Ascending aorta (tissue), 2 donors: ENCODE measurements at regions of chr9 and their contacts with region 1.

Region 1: DNA sequence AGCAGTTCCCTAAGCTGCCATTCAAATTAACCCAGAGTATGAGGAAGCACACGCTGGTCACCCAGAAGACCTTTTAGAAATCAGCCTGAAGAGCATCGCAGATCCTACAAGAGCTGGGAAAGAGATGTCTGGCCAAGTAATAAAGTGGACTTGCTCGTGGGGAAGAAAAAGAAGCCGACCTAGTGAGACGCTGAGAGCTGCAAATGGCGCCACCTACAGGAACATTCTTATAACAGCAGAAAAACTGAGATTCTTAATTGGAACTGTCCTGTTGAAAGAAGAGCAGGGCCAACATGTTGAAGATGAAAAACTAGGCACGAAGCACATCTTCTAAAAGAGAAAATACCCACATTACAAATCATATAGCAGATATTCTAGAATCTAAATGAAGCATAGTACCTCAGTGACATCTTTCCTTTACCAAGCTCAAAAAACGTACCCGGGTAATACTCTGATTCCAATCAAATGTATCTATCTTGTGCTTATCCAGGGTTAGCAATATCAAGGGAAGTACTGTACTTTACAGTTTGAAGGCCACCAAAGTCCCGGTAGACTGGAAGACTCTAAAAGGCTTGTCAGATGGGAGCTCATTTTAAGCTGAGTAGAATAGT is 3.9 kb upstream of the GNAQ start:
- DNase-seq: peak in 1 of 2 donors; percentile 74
- H3K4me3 ChIP-seq: peak overlapping the region in 1 of 2 donors; percentile 40
- H3K27ac ChIP-seq: peak overlapping the region; percentile 56 to 60
- H3K4me1 ChIP-seq: peaks cover 0 to 8% of the 10 kb centered on the region in 2 donors
- H3K27me3 ChIP-seq: no peaks in the 10 kb centered on the region
- CTCF ChIP-seq: peak; percentile 60 to 90 (median 81)

Region 2: DNA sequence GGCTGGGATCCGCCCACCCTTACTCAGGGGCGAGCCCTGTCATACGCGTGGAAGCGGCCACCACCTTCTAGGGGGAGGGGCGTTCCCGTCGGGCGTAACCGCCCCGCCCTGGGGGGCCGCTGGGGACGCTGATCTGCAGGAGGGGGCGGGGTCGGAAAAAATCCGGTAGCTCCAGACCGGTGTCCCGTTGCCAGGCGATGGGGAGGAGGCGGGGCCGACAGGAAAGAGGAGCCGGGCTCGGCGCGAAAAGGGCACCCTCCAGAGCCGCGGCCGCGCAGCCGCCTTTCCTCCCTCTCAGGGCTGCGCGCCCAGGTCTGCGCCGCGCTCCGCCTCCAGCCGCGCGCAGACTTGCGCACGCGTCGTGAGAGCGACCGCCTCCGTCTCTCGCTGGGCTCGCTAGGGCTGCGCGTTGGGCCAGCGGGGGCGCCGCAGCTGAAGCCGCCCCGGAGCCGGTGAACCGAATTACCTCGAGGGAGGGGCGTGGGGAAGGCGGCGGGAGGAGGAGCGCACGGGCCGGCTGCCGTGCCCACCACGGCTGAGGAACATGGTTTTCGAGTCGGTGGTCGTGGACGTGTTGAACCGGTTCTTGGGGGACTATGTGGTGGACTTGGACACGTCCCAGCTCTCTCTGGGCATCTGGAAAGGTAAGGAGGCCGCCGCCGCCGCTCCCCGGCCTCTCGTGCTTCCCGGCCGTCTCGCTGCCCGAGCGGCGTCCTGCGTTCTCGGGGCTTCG is 858.2 kb before region 1 on chr9 and contains the start of gene VPS13A:
- intact Hi-C with region 1: loop called (anchors 10 kb)
- DNase-seq: peak; percentile 78 to 97
- H3K4me3 ChIP-seq: peak within 1 kb of the TSS; percentile 64 to 90
- H3K27ac ChIP-seq: peak within 1 kb of the TSS; percentile 78 to 90
- H3K4me1 ChIP-seq: peaks cover 0 to 15% of the 10 kb centered on the region in 2 donors
- H3K27me3 ChIP-seq: no peaks in the 10 kb centered on the region
- CTCF ChIP-seq: peak in 1 of 3 experiments; percentile 46
- total RNA-seq, gene VPS13A: 18.8 TPM

Region 3: GRCh38 chr9:77456829-77457437 is 578.6 kb before region 1 on chr9:
- intact Hi-C with region 1: loop called (anchors 5 kb)
- DNase-seq: peak; percentile 25 to 92
- H3K4me3 ChIP-seq: no peak overlapping the region
- H3K27ac ChIP-seq: no peak overlapping the region
- H3K4me1 ChIP-seq: peaks cover 0 to 3% of the 10 kb centered on the region in 2 donors
- H3K27me3 ChIP-seq: no peaks in the 10 kb centered on the region
- CTCF ChIP-seq: peak; percentile 55 to 87 (median 87)

Region 4: GRCh38 chr9:77663754-77664153 is 371.7 kb before region 1 on chr9:
- intact Hi-C with region 1: loop called (anchors 5 kb)
- DNase-seq: peak in 1 of 2 donors; percentile 68
- H3K4me3 ChIP-seq: no peak overlapping the region
- H3K27ac ChIP-seq: peak overlapping the region in 1 of 2 donors; percentile 27
- H3K4me1 ChIP-seq: peaks cover 0 to 12% of the 10 kb centered on the region in 2 donors
- H3K27me3 ChIP-seq: no peaks in the 10 kb centered on the region
- CTCF ChIP-seq: no peak

Region 5: GRCh38 chr9:77751341-77752091 is 284.0 kb before region 1 on chr9:
- intact Hi-C with region 1: loop called (anchors 5 kb)
- DNase-seq: no peak
- H3K4me3 ChIP-seq: no peak overlapping the region
- H3K27ac ChIP-seq: peak overlapping the region; percentile 41 to 43
- H3K4me1 ChIP-seq: peaks cover 4 to 8% of the 10 kb centered on the region in 2 donors
- H3K27me3 ChIP-seq: no peaks in the 10 kb centered on the region
- CTCF ChIP-seq: peak; percentile 35 to 60 (median 42)

Region 6: DNA sequence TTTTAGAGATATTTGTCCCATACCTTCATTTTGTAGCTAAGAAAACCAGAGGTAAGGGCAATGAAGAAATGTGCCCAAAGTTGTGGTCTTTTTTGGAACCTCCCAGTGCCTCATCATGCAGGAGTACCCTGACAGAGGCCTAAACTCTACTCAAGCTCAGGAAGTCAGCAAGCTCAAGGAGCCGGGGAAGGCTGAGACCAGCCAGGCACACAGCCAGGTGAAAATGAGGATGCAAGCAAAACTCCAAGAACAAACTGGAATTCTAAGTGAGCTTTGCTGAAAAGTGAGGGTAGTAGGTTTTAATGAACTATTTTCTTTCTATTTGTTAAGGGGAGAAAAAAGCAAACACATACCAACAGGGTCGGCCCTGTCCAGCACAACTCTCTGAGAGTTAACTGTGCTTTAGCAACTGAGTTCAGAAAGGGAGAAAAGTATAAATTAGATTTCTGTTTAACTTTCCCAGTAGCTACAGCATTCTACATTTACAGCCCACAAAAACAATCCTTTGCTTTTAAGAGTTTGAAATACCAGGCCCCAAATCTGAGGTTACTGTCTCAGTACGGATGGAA is 150.3 kb before region 1 on chr9:
- intact Hi-C with region 1: loop called (anchors 5 kb)
- DNase-seq: no peak
- H3K4me3 ChIP-seq: no peak overlapping the region
- H3K27ac ChIP-seq: peak overlapping the region; percentile 57 to 58
- H3K4me1 ChIP-seq: peaks cover 0 to 14% of the 10 kb centered on the region in 2 donors
- H3K27me3 ChIP-seq: no peaks in the 10 kb centered on the region
- CTCF ChIP-seq: no peak